Gastrocnemius medialis (tissue), 4 donors: ENCODE measurements at regions of chr11 and their contacts with region 1.

Region 1: DNA sequence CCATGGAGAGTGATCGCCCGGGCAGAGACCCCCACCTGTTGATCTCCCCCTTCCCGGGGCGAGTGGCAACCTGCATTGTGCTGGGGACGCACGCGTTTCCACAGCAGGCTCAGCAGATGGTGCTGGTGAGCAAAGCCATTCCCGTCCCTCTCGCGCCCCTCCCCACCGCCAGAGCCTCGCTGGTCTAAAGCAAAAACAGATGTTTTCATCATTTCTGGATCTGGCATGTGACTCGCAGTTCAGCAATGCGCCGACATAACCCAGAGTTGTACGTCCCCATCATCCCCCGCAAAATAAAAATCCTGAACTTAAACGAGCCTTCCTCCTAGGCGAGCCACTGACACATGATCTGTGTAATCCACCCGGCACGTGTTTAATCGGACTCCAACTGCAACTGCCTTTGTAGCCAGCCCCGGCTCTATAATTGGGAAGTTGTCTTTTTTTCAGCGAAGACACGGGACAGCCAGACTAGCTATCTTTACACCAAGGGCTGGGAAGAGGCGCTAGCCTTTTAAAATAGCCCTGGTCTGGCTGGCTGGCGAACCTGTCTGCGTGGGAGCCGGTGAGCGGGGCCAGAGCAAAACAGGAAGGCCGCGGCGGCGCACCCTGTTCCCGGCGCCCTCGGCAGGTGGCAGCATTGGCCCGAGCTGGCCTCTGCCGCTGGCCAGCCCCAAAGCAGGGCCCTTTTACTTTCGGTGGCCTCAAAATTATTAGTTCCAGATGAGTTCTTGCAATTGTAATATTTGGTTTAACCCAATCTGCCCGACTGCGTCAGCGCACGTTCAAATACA is 203.0 kb upstream of the SORL1-AS1 start:
- DNase-seq: peak; percentile 75 to 80
- ATAC-seq: peak; percentile 89 to 94
- H3K4me3 ChIP-seq: peak overlapping the region; percentile 46 to 71 (median 52)
- H3K27ac ChIP-seq: peak overlapping the region; percentile 86 to 87 (median 86)
- H3K4me1 ChIP-seq: peaks cover 7 to 11% of the 10 kb centered on the region in 2 donors
- H3K27me3 ChIP-seq: no peaks in the 10 kb centered on the region
- CTCF ChIP-seq: peak; percentile 84 to 91 (median 87)
- POLR2A ChIP-seq: no peak

Region 2: GRCh38 chr11:121964591-121964990 is 308.9 kb after region 1 on chr11:
- in situ Hi-C with region 1: no loop called
- intact Hi-C with region 1: no loop called
- DNase-seq: peak; percentile 7 to 35
- ATAC-seq: peak; percentile 56 to 88
- H3K4me3 ChIP-seq: no peak overlapping the region
- H3K27ac ChIP-seq: no peak overlapping the region
- H3K4me1 ChIP-seq: peaks cover 8 to 13% of the 10 kb centered on the region in 2 donors
- H3K27me3 ChIP-seq: no peaks in the 10 kb centered on the region
- CTCF ChIP-seq: no peak
- POLR2A ChIP-seq: no peak

Region 3: DNA sequence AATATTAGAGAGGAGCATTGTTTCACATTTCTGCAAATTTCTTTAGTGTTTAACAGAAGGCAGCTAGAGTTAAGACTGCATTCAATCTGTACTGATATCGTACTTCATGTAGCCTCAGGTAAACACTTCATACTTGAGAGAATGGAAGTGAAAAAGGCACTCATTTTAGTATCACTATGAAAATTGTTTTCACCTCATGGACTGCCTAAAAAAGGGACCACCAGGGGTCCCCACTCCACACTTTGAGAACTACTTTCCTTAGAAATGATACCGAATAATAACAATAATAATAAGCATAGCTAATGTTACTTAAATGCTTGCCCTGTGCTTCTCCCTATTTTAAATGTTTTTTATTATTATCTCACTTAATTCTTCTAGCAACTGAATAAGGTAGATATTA is 365.2 kb after region 1 on chr11:
- in situ Hi-C with region 1: loop called in 1 of 4 experiments (anchors 25 kb)
- intact Hi-C with region 1: loop called (anchors 5 kb)
- DNase-seq: no peak
- ATAC-seq: no peak
- H3K4me3 ChIP-seq: no peak overlapping the region
- H3K27ac ChIP-seq: no peak overlapping the region
- H3K4me1 ChIP-seq: no peaks in the 10 kb centered on the region
- H3K27me3 ChIP-seq: no peaks in the 10 kb centered on the region
- CTCF ChIP-seq: peak in 3 of 5 experiments; percentile 10 to 46 (median 26)
- POLR2A ChIP-seq: no peak

Region 4: GRCh38 chr11:122093731-122094275 is 438.1 kb after region 1 on chr11:
- in situ Hi-C with region 1: loop called in 2 of 4 experiments (anchors 5 to 10 kb)
- intact Hi-C with region 1: loop called (anchors 1 kb)
- DNase-seq: no peak
- ATAC-seq: peak; percentile 52 to 57
- H3K4me3 ChIP-seq: no peak overlapping the region
- H3K27ac ChIP-seq: peak overlapping the region in 3 of 4 donors; percentile 6 to 92 (median 26)
- H3K4me1 ChIP-seq: peaks cover 13 to 20% of the 10 kb centered on the region in 2 donors
- H3K27me3 ChIP-seq: no peaks in the 10 kb centered on the region
- CTCF ChIP-seq: no peak
- POLR2A ChIP-seq: no peak

Region 5: GRCh38 chr11:122108192-122108799 is 452.6 kb after region 1 on chr11:
- in situ Hi-C with region 1: loop called in 2 of 4 experiments (anchors 10 to 25 kb)
- intact Hi-C with region 1: no loop called
- DNase-seq: no peak
- ATAC-seq: peak in 1 of 2 donors; percentile 32
- H3K4me3 ChIP-seq: no peak overlapping the region
- H3K27ac ChIP-seq: peak overlapping the region; percentile 74 to 90 (median 80)
- H3K4me1 ChIP-seq: peaks cover 5 to 24% of the 10 kb centered on the region in 2 donors
- H3K27me3 ChIP-seq: no peaks in the 10 kb centered on the region
- CTCF ChIP-seq: peak; percentile 15 to 57 (median 37)
- POLR2A ChIP-seq: no peak

Region 6: DNA sequence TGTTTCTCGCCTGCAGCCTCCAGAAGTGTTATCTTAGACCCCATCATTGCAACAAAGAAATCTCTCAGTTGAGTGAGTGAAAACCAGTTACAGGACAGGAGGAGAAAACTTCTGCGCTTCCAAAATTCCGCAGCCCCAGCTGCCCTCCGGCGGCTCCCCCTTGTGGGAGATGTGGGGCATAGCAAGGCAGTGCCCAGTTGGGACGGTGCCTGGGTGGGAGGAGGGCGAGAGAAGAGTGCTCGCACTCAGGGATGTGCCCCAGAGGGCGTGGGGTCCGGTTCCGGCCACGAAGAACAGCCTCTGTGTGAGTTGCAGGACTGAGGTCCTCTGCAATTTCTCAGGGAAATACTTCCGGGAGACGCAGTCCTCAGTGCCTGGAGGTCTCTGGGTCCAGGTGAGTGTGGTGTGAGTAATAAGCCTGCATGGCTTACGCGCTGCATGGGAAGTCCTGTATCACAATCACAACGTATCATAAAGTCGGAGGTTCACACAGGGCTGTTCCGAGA is 547.3 kb after region 1 on chr11:
- in situ Hi-C with region 1: loop called (anchors 5 to 10 kb)
- intact Hi-C with region 1: loop called (anchors 1 kb)
- DNase-seq: peak; percentile 41 to 63
- ATAC-seq: peak; percentile 87 to 90
- H3K4me3 ChIP-seq: peak overlapping the region; percentile 17 to 35 (median 28)
- H3K27ac ChIP-seq: peak overlapping the region in 1 of 4 donors; percentile 22
- H3K4me1 ChIP-seq: peaks cover 10 to 21% of the 10 kb centered on the region in 2 donors
- H3K27me3 ChIP-seq: no peaks in the 10 kb centered on the region
- CTCF ChIP-seq: peak; percentile 88 to 97 (median 93)
- POLR2A ChIP-seq: no peak

Region 7: GRCh38 chr11:122209619-122210366 is 554.1 kb after region 1 on chr11:
- in situ Hi-C with region 1: loop called (anchors 5 to 10 kb)
- intact Hi-C with region 1: no loop called
- DNase-seq: peak; percentile 48 to 58
- ATAC-seq: peak; percentile 79 to 86
- H3K4me3 ChIP-seq: no peak overlapping the region
- H3K27ac ChIP-seq: peak overlapping the region in 3 of 4 donors; percentile 24 to 44 (median 32)
- H3K4me1 ChIP-seq: peaks cover 30 to 35% of the 10 kb centered on the region in 2 donors
- H3K27me3 ChIP-seq: no peaks in the 10 kb centered on the region
- CTCF ChIP-seq: no peak
- POLR2A ChIP-seq: no peak